Activated CD4-positive, alpha-beta T cell treated with anti-CD3 and anti-CD28 coated beads for 36 hours (primary cell): ENCODE measurements at regions of chr16 and their contacts with region 1.

Region 1: GRCh38 chr16:81778861-81779535 is at the start of gene PLCG2:
- DNase-seq: peak; percentile 83
- ATAC-seq: peak; percentile 99
- H3K4me3 Mint-ChIP-seq: peak within 1 kb of the TSS; percentile 67
- H3K27ac Mint-ChIP-seq: no peak within 1 kb of the TSS
- H3K4me1 Mint-ChIP-seq: peaks cover 6% of the 10 kb centered on the region
- H3K27me3 Mint-ChIP-seq: peaks cover 38% of the 10 kb centered on the region
- total RNA-seq, gene PLCG2: 7.0 to 7.6 TPM

Region 2: DNA sequence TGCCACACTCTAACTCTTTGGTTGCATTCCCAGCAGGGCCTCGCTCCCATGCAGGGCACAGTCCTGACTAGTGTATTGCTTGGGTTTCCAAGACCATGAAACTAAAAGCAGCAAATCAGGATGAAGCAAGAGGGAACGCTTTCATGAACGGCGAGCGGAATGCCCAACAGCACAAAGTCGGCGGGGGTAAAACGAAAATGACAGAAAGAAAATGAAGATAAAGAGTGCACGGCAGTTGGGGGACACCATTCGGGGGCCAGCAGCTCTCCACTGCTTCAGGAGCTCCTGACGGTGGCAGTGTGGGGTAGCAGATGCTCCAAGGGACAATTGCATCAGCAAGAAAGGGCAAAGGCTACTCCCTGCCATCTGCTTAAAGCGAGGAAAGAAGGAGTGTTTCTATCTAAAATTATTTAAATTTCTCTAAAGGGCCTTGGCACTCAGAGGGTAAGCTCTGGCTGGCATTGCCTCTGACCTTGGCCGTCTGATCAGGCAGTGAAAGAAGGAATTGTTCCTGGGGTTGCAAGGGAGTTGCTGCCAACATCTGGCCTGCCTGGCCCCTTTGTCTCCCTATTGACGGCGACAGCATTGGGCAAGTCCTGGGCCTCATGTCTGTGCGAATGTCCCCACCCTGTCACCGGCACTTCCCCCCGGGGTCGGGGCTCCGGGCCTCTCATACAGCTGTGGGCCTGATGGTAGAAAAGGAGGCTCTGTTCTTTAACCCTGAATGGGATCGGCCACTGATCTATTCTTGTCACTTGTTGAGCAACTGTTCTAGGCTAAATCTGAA is 196.2 kb before region 1 on chr16:
- CTCF ChIA-PET with region 1: no interaction called
- POLR2A ChIA-PET with region 1: no interaction called
- intact Hi-C with region 1: no loop called
- DNase-seq: no peak
- ATAC-seq: no peak
- H3K4me3 Mint-ChIP-seq: no peak overlapping the region
- H3K27ac Mint-ChIP-seq: no peak overlapping the region
- H3K4me1 Mint-ChIP-seq: peaks cover 2% of the 10 kb centered on the region
- H3K27me3 Mint-ChIP-seq: no peaks in the 10 kb centered on the region

Region 3: GRCh38 chr16:81745704-81746558 is 33.1 kb before region 1 on chr16:
- CTCF ChIA-PET with region 1: no interaction called
- POLR2A ChIA-PET with region 1: no interaction called
- intact Hi-C with region 1: loop called in 1 of 2 experiments (anchors 1 kb)
- DNase-seq: peak; percentile 85
- ATAC-seq: peak; percentile 91
- H3K4me3 Mint-ChIP-seq: peak overlapping the region; percentile 73
- H3K27ac Mint-ChIP-seq: peak overlapping the region; percentile 87
- H3K4me1 Mint-ChIP-seq: peaks cover 16% of the 10 kb centered on the region
- H3K27me3 Mint-ChIP-seq: no peaks in the 10 kb centered on the region